Lower leg skin (tissue), 4 donors: ENCODE measurements at regions of chr1 and their contacts with region 1.

Region 1: DNA sequence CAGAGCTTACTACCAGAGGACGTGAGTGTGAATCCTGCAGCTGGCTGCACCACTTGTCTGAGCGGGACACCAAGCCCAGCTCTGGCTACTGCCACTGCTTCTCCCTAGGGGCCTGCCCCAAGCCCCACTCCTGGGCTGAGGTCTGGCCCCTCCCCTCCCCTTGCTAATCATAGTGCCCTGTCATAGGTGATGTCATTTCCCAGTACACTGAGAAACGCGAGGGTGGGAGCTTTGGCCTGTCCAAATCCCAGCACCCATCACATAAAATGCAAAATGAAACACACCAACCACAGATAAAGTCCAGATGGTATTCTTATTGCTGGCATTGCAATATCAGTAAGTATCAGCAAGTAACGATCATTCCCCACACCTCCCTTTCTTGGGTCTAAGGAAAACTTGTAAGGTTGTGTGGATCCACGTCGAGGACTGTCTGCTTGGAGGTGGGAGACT is 77.7 kb downstream of the TOMM20 start:
- DNase-seq: no peak
- H3K4me3 ChIP-seq: no peak overlapping the region
- CTCF ChIP-seq: no peak
- POLR2A ChIP-seq: no peak

Region 2: GRCh38 chr1:234722904-234723720 is 327.8 kb before region 1 on chr1:
- intact Hi-C with region 1: loop called (anchors 10 kb)
- DNase-seq: peak; percentile 87 to 96
- H3K4me3 ChIP-seq: no peak overlapping the region
- CTCF ChIP-seq: no peak
- POLR2A ChIP-seq: no peak

Region 3: GRCh38 chr1:235018161-235018560 is 32.8 kb before region 1 on chr1:
- intact Hi-C with region 1: no loop called
- DNase-seq: peak; percentile 63 to 88
- H3K4me3 ChIP-seq: no peak overlapping the region
- CTCF ChIP-seq: no peak
- POLR2A ChIP-seq: no peak